Left ventricle myocardium superior (tissue), 1 donor: ENCODE measurements at regions of chr12 and their contacts with region 1.

Region 1: DNA sequence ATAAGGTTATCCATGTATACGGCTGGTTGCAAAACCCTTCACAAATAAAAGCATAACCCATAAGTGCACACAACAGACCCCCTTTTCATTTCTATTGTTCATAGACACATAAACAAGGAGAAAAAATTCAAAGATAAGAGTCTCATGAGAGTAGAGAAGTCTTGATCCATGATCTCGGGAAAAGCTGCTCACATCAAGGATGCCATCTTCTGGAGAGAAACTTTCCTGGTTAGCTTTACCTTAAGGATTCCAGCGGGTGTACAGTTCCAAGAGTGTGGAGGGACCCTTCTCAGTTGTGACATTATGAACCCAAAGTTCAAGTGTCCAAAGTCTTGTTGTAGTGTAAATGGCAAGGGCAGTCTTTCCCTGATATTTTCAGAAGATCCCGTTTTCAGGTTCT is 144.5 kb downstream of the LLPH start:
- DNase-seq: no peak
- ATAC-seq: no peak

Region 2: DNA sequence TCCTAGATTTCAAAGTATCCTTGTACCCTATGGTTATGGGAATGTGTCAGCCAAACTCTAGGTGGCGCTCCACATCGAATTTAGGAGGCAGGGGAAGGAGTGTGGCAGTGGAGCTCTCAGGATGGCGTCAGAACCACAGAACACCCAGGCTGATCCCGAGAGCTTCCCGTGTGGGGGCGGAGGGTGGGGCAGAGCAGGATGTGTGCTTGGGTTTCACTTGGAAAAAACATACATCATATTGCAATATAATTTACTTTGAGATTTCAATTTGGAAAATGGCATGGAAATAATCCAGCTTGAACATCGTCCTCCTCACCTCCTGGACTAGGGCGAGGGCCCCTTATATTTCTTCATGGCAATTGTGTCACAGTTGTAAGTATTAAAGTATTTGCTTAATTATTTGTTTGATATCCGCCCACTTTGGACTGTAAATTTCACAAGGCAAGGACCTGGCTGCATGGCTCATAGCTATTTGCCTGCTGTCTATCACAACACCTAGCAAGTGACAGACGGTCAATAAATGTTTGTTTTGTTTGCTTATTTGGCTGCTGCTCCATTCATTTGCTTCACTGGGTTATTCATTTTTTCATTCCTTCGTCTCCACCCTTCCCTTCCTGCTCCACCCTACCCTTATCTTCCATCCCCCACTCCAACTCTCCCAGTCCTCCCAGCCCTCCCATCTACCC is 383.3 kb before region 1 on chr12:
- intact Hi-C with region 1: loop called (anchors 10 kb)
- DNase-seq: peak; percentile 72
- ATAC-seq: peak; percentile 96

Region 3: GRCh38 chr12:65810036-65810435 is 176.0 kb before region 1 on chr12:
- intact Hi-C with region 1: no loop called
- DNase-seq: no peak
- ATAC-seq: no peak